CD8-positive, alpha-beta T cell (primary cell): ENCODE measurements at regions of chr20 and their contacts with region 1.

Region 1: DNA sequence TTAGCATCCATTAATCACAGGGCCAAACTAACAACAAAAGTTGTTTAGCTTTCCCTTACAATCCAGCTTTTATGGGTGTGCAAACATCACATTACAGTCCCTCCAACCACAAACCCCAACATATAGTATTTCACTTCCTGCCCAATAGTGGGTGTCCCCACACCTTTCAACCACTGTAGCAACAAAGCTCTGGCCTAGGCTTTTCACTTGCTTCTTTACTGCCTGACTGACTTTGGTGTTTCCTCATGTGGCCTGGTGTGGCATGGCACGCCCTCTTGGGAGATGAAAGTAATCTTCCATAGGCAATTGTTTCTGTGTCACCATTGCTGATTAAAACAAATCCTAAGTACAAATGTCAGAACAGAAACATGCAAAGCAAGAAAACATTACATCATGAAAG is 46.3 kb downstream of the MCM8 start:
- DNase-seq: peak; percentile 7 to 88 (median 49)
- ATAC-seq: peak; percentile 95
- H3K4me3 ChIP-seq: no peak overlapping the region
- H3K4me3 Mint-ChIP-seq: peak overlapping the region; percentile 8
- H3K27ac ChIP-seq: peak overlapping the region in 1 of 2 experiments; percentile 37
- H3K27ac Mint-ChIP-seq: peak overlapping the region; percentile 75
- H3K4me1 ChIP-seq: peaks cover 18% of the 10 kb centered on the region
- H3K4me1 Mint-ChIP-seq: peaks cover 35% of the 10 kb centered on the region
- H3K27me3 ChIP-seq: no peaks in the 10 kb centered on the region
- H3K27me3 Mint-ChIP-seq: no peaks in the 10 kb centered on the region
- CTCF ChIP-seq: no peak

Region 2: GRCh38 chr20:5557123-5557522 is 439.6 kb before region 1 on chr20:
- CTCF ChIA-PET with region 1: no interaction called
- POLR2A ChIA-PET with region 1: no interaction called
- intact Hi-C with region 1: loop called in 1 of 2 experiments (anchors 5 kb)
- DNase-seq: peak; percentile 17 to 66 (median 51)
- ATAC-seq: peak; percentile 74
- H3K4me3 ChIP-seq: no peak overlapping the region
- H3K4me3 Mint-ChIP-seq: no peak overlapping the region
- H3K27ac ChIP-seq: no peak overlapping the region
- H3K27ac Mint-ChIP-seq: peak overlapping the region; percentile 18
- H3K4me1 ChIP-seq: no peaks in the 10 kb centered on the region
- H3K4me1 Mint-ChIP-seq: no peaks in the 10 kb centered on the region
- H3K27me3 ChIP-seq: no peaks in the 10 kb centered on the region
- H3K27me3 Mint-ChIP-seq: no peaks in the 10 kb centered on the region
- CTCF ChIP-seq: no peak

Region 3: GRCh38 chr20:6240059-6240458 is 243.3 kb after region 1 on chr20:
- CTCF ChIA-PET with region 1: no interaction called
- POLR2A ChIA-PET with region 1: no interaction called
- intact Hi-C with region 1: no loop called
- DNase-seq: no peak
- ATAC-seq: no peak
- H3K4me3 ChIP-seq: no peak overlapping the region
- H3K4me3 Mint-ChIP-seq: no peak overlapping the region
- H3K27ac ChIP-seq: no peak overlapping the region
- H3K27ac Mint-ChIP-seq: no peak overlapping the region
- H3K4me1 ChIP-seq: no peaks in the 10 kb centered on the region
- H3K4me1 Mint-ChIP-seq: no peaks in the 10 kb centered on the region
- H3K27me3 ChIP-seq: no peaks in the 10 kb centered on the region
- H3K27me3 Mint-ChIP-seq: peaks cover 4% of the 10 kb centered on the region
- CTCF ChIP-seq: no peak